ENCODE measurements at regions of chr19 and their contacts with region 1.

Region 1: GRCh38 chr19:54023191-54023590 is 31.8 kb downstream of the CACNG6 start:
- DNase-seq: no peak
- ATAC-seq: no peak
- H3K4me3 ChIP-seq: no peak overlapping the region
- H3K27ac ChIP-seq: peak overlapping the region; percentile 80; the same call in 1 of the 2 replicates
- H3K4me1 ChIP-seq: peaks cover 42% of the 10 kb centered on the region
- H3K27me3 ChIP-seq: no peaks in the 10 kb centered on the region
- CTCF ChIP-seq: no peak

Region 2: GRCh38 chr19:53881482-53882390 is 141.5 kb before region 1 on chr19 and contains the start of gene PRKCG:
- CTCF ChIA-PET with region 1: interaction called, 8 read pairs
- POLR2A ChIA-PET with region 1: no interaction called
- intact Hi-C with region 1: loop called (anchors 1 kb)
- DNase-seq: peak; percentile 52
- ATAC-seq: peak; percentile 37
- H3K4me3 ChIP-seq: peak within 1 kb of the TSS; percentile 65
- H3K27ac ChIP-seq: no peak within 1 kb of the TSS
- H3K4me1 ChIP-seq: peaks cover 20% of the 10 kb centered on the region
- H3K27me3 ChIP-seq: peaks cover 33% of the 10 kb centered on the region
- CTCF ChIP-seq: peak; percentile 67
- total RNA-seq, gene PRKCG: 1.5 TPM in 1 of 2 replicates, not detected in the other

Region 3: DNA sequence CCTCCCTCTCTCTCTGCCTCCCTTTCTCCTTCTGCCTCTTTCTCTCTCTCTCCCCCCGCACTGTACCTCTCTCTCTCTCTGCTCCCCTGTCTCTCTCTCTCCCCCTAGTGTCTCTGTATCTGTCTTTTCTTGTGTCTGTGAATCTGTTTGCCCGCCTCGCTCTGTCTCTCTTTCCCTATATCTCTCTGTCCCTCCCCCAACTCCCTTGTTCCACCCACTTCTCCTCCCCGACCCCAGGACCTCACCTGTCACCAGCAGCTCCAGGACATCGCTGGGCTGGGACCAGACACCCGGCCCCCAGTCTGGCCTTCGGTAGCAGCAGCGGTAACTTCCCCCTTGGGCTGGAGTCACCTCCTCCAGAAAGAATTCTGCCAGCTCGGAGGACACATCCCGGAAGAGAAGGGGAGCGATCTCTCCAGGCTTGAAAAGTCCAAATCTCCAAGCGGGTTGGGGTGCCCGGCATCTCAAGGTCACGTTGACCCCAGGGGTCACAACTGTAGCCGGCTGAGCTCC is 73.5 kb after region 1 on chr19:
- CTCF ChIA-PET with region 1: no interaction called
- POLR2A ChIA-PET with region 1: no interaction called
- intact Hi-C with region 1: no loop called
- DNase-seq: peak; percentile 25
- ATAC-seq: peak; percentile 64
- H3K4me3 ChIP-seq: peak overlapping the region; percentile 53; the same call in 1 of the 2 replicates
- H3K27ac ChIP-seq: no peak overlapping the region
- H3K4me1 ChIP-seq: peaks cover 8% of the 10 kb centered on the region
- H3K27me3 ChIP-seq: no peaks in the 10 kb centered on the region
- CTCF ChIP-seq: peak; percentile 52

Measured in PC-3 (cell line).